ENCODE measurements at regions of chr3 and their contacts with region 1.

Region 1: GRCh38 chr3:197599089-197599765 is 43.5 kb upstream of the BDH1 start:
- DNase-seq: peak; percentile 57 to 72 (median 72)
- H3K4me3 ChIP-seq: no peak overlapping the region
- H3K4me3 Mint-ChIP-seq: no peak overlapping the region
- H3K27ac ChIP-seq: no peak overlapping the region
- H3K27ac Mint-ChIP-seq: no peak overlapping the region
- H3K4me1 ChIP-seq: no peaks in the 10 kb centered on the region
- H3K4me1 Mint-ChIP-seq: no peaks in the 10 kb centered on the region
- H3K27me3 ChIP-seq: no peaks in the 10 kb centered on the region
- H3K27me3 Mint-ChIP-seq: peaks cover 0 to 3% (median 2%) of the 10 kb centered on the region in 3 donors
- CTCF ChIP-seq: peak; percentile 96

Region 2: DNA sequence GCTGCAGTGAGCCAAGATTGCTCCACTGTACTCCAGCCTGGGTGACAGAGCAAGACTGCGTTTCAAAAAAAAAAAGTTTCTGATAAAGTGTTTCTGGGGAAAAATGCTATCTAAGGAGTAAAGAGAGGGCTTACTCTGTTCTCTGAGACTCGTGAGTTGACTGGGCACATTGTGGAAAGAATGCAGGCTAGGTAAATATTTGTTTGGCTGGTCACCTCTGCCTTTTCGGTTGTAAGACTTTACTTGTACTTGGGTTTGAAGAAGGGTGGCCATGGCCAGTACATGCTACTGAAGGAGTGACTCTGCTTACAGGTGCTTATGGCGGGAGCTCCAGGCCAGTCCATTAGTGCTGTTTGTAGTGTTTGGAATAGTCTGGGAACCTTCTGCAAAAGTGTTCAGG is 68.8 kb after region 1 on chr3:
- intact Hi-C with region 1: loop called in 1 of 2 experiments (anchors 5 kb)
- DNase-seq: no peak
- H3K4me3 ChIP-seq: no peak overlapping the region
- H3K4me3 Mint-ChIP-seq: no peak overlapping the region
- H3K27ac ChIP-seq: no peak overlapping the region
- H3K27ac Mint-ChIP-seq: no peak overlapping the region
- H3K4me1 ChIP-seq: peaks cover 0 to 4% of the 10 kb centered on the region in 2 donors
- H3K4me1 Mint-ChIP-seq: peaks cover 4% of the 10 kb centered on the region
- H3K27me3 ChIP-seq: peaks cover 3 to 7% of the 10 kb centered on the region in 2 donors
- H3K27me3 Mint-ChIP-seq: peaks cover 4 to 10% (median 9%) of the 10 kb centered on the region in 3 donors
- CTCF ChIP-seq: no peak

Region 3: GRCh38 chr3:197736491-197737318 is 137.5 kb after region 1 on chr3 and contains the start of gene RUBCN:
- intact Hi-C with region 1: no loop called
- DNase-seq: peak; percentile 92 to 93 (median 92)
- H3K4me3 ChIP-seq: peak within 1 kb of the TSS; percentile 76 to 94 (median 83)
- H3K4me3 Mint-ChIP-seq: peak within 1 kb of the TSS; percentile 94 to 99
- H3K27ac ChIP-seq: peak within 1 kb of the TSS; percentile 79 to 82
- H3K27ac Mint-ChIP-seq: peak within 1 kb of the TSS; percentile 89 to 96 (median 91)
- H3K4me1 ChIP-seq: peaks cover 28 to 33% of the 10 kb centered on the region in 2 donors
- H3K4me1 Mint-ChIP-seq: peaks cover 32% of the 10 kb centered on the region
- H3K27me3 ChIP-seq: no peaks in the 10 kb centered on the region
- H3K27me3 Mint-ChIP-seq: peaks cover 2 to 6% (median 2%) of the 10 kb centered on the region in 3 donors
- CTCF ChIP-seq: no peak
- polyA plus RNA-seq, gene RUBCN: 8.6 to 37.9 (median 13.5) TPM